ENCODE measurements at regions of chr5 and their contacts with region 1.

Region 1: GRCh38 chr5:141524604-141525597 is 36.0 kb downstream of the PCDHGC5 start:
- DNase-seq: peak; percentile 96
- H3K27ac ChIP-seq: peak overlapping the region; percentile 67
- CTCF ChIP-seq: peak; percentile 99

Region 2: DNA sequence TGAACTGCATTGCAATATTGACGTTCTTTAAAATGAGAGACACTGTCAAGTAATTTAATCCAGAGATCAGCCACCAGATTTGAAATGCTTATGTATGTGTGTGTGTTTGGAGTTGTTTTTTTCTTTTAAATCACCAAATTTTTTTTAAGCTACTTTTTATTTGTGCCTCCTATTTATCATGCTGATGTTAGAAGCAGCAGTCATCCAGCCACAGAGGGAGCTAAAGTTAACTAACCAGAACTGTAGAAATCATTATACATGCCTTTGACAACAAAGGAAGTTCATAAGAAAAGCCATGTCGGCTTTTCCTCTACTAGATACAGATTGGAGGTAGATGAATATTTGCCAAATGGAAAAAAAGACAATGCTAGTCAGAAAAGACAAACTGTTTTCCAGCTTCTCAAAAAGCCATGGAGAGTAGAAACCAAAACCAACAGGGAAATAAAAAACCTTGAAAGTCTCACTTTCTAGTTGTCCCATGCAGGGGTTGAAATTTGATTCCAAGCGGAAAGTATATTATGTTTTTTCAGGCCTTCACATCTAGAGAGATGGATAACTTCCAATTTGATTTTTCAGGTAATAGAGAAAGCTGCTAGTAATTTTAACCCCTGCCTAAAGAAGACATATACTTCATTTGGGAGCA is 1406.5 kb before region 1 on chr5:
- CTCF ChIA-PET with region 1: no interaction called
- POLR2A ChIA-PET with region 1: no interaction called
- DNase-seq: no peak
- H3K27ac ChIP-seq: no peak overlapping the region
- CTCF ChIP-seq: no peak

Region 3: DNA sequence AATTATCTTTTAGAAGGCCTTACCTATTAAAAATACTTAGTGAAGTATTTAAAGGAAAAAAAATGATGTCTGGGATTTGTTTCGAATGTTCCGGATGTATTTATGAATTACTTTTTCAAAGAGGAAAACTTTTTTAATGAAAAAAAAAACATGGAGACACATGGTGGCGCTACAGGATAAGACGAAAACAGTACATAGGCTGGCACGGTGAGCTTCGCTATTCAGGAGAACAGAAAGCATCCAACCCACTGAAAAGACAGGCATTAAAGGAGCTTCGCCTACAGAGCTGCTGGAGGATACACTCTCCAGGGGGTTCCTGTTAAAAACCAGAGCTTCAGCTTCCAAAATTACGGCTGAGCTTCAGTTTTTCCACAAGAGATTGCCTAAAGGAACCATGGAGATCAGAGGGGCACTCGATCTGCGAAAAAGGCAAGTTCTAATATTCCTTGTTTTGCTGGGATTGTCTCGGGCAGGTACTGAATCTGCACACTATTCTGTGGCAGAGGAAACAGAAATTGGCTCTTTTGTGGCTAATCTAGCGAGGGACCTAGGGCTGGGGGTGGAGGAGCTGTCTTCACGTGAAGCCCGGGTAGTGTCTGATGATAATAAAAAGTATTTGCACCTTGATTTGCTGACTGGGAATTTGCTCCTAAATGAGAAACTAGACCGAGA is 301.7 kb before region 1 on chr5 and contains the start of gene PCDHB14:
- CTCF ChIA-PET with region 1: interaction called, 12 read pairs
- POLR2A ChIA-PET with region 1: no interaction called
- DNase-seq: peak; percentile 60
- H3K27ac ChIP-seq: no peak within 1 kb of the TSS
- CTCF ChIP-seq: peak; percentile 57; the same call in 1 of the 2 replicates

Region 4: GRCh38 chr5:141402553-141403260 is 122.2 kb before region 1 on chr5 and contains the start of gene PCDHGA9:
- CTCF ChIA-PET with region 1: interaction called, 11 read pairs
- POLR2A ChIA-PET with region 1: no interaction called
- DNase-seq: peak; percentile 47
- H3K27ac ChIP-seq: no peak within 1 kb of the TSS
- CTCF ChIP-seq: peak; percentile 23; the same call in 1 of the 2 replicates

Region 5: DNA sequence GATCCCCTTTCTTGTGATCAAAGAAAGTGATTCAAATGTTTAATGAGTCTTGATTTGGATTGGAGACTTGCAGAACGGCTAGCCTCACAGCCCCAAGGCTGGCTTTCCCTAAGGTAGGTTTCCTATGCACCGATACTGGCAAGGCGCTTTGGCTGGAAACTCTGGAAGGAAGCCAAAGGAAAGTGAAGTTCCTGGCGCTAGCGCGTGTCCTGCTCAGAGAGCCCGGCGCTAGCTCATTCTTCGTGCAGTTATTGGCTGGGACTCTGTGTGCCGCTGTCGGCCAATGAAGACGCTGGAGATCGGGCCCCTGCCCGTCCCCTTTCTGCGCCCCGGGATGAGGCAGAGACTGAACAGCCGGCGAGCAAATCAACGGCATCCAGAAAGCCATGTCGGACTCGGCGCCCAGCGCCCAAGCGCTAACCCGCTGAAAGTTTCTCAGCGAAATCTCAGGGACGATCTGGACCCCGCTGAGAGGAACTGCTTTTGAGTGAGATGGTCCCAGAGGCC is 49.2 kb before region 1 on chr5 and contains the start of gene PCDHGC3:
- CTCF ChIA-PET with region 1: interaction called, 17 read pairs
- POLR2A ChIA-PET with region 1: interaction called, 3 read pairs
- DNase-seq: peak; percentile 99
- H3K27ac ChIP-seq: peak within 1 kb of the TSS; percentile 90
- CTCF ChIP-seq: peak; percentile 71

Region 6: DNA sequence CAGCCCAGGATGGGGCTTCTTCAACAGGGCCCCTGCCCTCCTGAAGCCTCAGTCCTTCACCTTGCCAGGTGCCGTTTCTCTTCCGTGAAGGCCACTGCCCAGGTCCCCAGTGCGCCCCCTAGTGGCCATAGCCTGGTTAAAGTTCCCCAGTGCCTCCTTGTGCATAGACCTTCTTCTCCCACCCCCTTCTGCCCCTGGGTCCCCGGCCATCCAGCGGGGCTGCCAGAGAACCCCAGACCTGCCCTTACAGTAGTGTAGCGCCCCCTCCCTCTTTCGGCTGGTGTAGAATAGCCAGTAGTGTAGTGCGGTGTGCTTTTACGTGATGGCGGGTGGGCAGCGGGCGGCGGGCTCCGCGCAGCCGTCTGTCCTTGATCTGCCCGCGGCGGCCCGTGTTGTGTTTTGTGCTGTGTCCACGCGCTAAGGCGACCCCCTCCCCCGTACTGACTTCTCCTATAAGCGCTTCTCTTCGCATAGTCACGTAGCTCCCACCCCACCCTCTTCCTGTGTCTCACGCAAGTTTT is 12.5 kb before region 1 on chr5:
- CTCF ChIA-PET with region 1: interaction called, 22 read pairs
- POLR2A ChIA-PET with region 1: no interaction called
- DNase-seq: peak; percentile 38
- H3K27ac ChIP-seq: peak overlapping the region; percentile 99
- CTCF ChIP-seq: no peak; the same call in 1 of the 2 replicates

Region 7: GRCh38 chr5:141557681-141558136 is 32.8 kb after region 1 on chr5:
- CTCF ChIA-PET with region 1: interaction called, 17 read pairs
- POLR2A ChIA-PET with region 1: no interaction called
- DNase-seq: peak; percentile 91
- H3K27ac ChIP-seq: peak overlapping the region; percentile 82
- CTCF ChIP-seq: peak; percentile 84

Region 8: DNA sequence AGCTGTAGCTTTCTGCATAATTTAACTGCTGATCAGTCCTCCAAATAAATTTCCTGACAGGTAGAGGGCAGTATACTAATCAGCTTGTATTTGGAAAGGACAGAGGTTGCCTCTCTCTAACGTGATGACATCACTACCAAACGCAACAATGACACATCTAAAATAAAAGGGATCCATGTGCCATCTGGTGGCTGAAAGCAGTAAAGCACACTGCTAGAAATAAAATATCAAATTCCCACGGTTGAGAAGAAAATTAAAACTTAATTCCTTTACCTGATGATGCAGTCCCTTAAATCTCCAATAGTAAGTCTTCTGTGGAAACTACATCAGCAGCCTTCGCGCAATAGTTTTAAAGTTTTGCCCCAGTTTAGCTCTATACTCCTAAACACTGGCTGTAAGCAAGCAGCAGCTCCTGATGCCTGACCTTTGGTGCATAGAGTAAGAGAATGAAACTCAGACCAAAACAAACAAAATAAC is 39.4 kb after region 1 on chr5:
- CTCF ChIA-PET with region 1: interaction called, 13 read pairs
- POLR2A ChIA-PET with region 1: no interaction called
- DNase-seq: peak; percentile 80
- H3K27ac ChIP-seq: no peak overlapping the region
- CTCF ChIP-seq: peak; percentile 97

Region 9: GRCh38 chr5:141805874-141806595 is 281.1 kb after region 1 on chr5:
- CTCF ChIA-PET with region 1: no interaction called
- POLR2A ChIA-PET with region 1: no interaction called
- DNase-seq: no peak
- H3K27ac ChIP-seq: no peak overlapping the region
- CTCF ChIP-seq: no peak

Measured in RWPE1 (cell line).